Prostate gland (tissue), 2 donors: ENCODE measurements at regions of chr22 and their contacts with region 1.

Region 1: GRCh38 chr22:37676736-37677492 is 1.5 kb downstream of the LGALS1 start:
- DNase-seq: peak; percentile 76
- H3K4me3 ChIP-seq: peak overlapping the region; percentile 38 to 49
- H3K27ac ChIP-seq: peak overlapping the region; percentile 85 to 91
- H3K4me1 ChIP-seq: peaks cover 16% of the 10 kb centered on the region
- H3K27me3 ChIP-seq: no peaks in the 10 kb centered on the region
- CTCF ChIP-seq: no peak
- POLR2A ChIP-seq: peak; percentile 46

Region 2: DNA sequence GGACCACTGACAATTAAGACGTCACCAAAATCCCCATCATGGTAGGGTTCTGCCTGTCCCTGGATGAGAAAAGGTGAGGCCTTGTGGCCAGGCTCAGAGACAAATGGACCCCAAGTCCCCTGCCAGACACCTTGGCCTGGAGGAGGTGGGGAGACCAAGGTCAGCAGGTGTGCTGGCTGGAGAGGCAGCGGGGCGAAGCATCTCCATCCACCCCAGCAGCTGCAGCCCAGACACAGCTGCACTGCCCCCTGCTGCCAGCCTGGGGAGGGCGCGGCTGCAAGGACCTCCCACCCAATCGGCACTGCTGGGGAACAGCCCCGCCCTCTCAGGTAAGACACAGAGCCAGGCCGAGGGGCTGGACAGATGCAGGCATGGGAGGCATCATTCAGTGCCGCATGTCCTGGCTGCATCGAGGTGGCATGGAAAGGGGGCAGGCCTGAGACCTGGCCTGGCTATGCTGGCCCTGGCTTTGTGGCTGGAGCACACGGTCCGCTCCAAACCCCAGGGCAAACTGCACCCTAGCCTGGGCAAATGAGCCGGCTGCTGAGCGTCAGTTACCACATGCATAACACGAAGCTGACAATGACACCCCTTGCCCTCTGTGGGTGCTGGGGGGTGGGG is 178.5 kb before region 1 on chr22:
- intact Hi-C with region 1: no loop called
- DNase-seq: no peak
- H3K4me3 ChIP-seq: no peak overlapping the region
- H3K27ac ChIP-seq: no peak overlapping the region
- H3K4me1 ChIP-seq: peaks cover 19% of the 10 kb centered on the region
- H3K27me3 ChIP-seq: no peaks in the 10 kb centered on the region
- CTCF ChIP-seq: peak in 3 of 4 experiments; percentile 9 to 35 (median 30)
- POLR2A ChIP-seq: no peak

Region 3: DNA sequence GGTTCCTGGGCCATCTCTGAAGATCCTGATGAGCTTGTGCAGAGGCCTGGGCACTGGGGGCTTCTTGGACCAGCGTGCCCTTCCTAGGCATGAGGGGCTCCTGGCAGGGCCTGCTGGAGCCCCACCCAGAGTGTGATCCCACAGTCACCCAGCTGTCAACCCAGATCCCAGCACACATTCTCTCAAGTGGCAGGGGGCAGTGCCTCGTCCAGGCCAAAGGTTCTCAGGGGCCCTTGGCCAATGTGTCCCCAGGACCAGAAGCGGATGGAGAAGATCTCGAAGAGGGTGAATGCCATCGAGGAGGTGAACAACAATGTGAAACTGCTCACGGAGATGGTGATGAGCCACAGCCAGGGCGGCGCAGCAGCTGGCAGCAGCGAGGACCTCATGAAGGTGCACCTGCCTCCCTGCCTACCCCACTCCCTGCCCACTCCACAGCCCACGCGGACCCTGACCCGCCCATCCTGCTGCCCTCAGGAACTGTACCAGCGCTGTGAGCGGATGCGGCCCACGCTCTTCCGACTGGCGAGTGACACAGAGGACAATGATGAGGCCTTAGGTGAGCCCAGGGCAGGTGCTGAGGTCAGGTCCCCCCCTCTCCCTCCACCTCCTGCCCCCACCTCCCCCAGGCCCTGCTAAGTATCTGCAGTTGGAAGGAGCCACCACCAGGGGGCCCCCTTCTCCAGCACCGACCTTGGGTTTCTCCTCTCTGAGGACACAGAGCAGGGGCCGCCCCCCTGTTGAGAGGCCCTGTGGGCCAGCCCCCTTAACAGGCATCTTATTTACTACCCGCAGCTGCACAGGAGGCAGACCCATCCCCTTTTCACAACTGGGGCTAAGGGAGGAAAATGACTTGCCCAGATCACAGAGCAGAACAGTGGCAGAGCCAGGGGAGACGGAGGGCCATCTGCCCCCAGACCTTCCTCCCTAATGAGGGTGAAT is 53.6 kb before region 1 on chr22:
- intact Hi-C with region 1: loop called (anchors 2 kb)
- DNase-seq: no peak
- H3K4me3 ChIP-seq: no peak overlapping the region
- H3K27ac ChIP-seq: peak overlapping the region in 1 of 2 donors; percentile 3
- H3K4me1 ChIP-seq: peaks cover 7% of the 10 kb centered on the region
- H3K27me3 ChIP-seq: no peaks in the 10 kb centered on the region
- CTCF ChIP-seq: peak; percentile 58 to 85 (median 72)
- POLR2A ChIP-seq: no peak

Region 4: DNA sequence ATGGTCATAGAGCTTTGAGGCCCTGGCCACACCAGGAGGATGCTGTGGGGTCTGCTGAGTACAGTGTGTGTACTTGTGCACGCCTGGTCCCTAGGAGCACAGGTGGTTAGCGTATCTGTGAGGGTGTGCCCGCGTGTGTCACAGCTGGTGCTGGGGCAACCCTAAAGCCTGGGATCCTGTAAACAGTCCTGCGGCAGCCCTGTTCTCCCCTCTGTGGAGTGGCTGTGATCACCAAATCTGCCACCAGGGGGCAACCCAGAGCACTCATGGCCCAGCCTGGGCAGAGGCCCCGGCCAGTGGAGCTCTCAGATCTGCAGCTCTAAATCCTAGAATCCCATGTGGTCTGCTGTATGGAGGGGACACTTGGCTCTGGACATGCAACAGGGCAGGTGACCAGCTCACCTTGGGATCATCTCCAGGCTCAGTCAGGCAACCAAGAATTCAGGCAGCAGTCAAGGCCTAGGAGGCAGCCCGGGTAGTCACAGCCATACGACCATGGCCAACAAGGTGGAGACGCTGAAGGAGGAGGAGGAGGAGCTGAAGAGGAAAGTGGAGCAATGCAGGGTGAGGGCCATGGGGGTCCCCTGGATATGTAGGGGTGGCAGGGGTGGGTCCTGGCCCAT is 33.6 kb before region 1 on chr22:
- intact Hi-C with region 1: loop called (anchors 5 kb)
- DNase-seq: peak; percentile 74
- H3K4me3 ChIP-seq: no peak overlapping the region
- H3K27ac ChIP-seq: no peak overlapping the region
- H3K4me1 ChIP-seq: no peaks in the 10 kb centered on the region
- H3K27me3 ChIP-seq: no peaks in the 10 kb centered on the region
- CTCF ChIP-seq: peak; percentile 89 to 93 (median 90)
- POLR2A ChIP-seq: no peak